ENCODE measurements at regions of chrX and their contacts with region 1.

Region 1: DNA sequence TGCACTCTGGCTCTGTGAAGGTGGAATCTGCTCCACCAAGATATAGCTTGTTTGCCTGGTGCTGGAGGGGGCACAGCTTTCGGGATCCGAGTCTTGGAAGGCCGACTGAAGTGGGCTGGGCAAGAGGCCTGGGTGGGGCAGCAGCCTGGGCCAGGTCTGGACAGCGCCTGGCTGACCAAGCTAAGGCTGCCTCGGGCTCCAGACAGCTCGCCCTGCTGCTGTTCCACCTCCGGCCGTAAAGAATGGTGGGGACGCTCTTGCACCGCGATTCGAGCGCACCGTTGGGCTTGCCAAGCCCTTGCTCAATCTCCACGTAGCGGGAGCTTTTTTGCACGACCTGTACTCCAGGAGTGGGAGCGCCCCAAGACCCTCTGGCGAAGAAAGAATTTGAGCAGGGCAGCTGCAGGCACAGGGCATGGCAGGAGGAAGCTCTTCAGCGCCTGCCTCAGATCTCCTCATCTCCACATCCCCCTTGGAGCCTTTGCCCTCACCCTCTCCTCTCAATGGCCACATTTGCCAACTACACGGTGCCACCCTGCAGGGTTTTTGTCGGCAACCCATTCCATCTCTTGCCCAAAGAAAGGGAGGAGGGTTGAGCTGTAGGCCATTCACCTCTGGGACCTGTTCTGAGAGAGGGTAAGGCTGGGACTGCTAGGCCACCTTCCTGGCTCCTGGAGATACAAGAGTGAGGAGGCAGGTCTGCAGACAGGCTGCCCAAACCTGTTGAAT is 18.9 kb downstream of the CNGA2 start:
- DNase-seq: peak; percentile 86

Region 2: GRCh38 chrX:152632445-152633097 is 879.1 kb after region 1 on chrX:
- intact Hi-C with region 1: loop called in 1 of 2 experiments (anchors 5 kb)
- DNase-seq: peak; percentile 78

Region 3: GRCh38 chrX:152641996-152642395 is 888.5 kb after region 1 on chrX:
- intact Hi-C with region 1: loop called in 1 of 2 experiments (anchors 10 kb)
- DNase-seq: no peak